T-cell (primary cell): ENCODE measurements at regions of chr2 and their contacts with region 1.

Region 1: DNA sequence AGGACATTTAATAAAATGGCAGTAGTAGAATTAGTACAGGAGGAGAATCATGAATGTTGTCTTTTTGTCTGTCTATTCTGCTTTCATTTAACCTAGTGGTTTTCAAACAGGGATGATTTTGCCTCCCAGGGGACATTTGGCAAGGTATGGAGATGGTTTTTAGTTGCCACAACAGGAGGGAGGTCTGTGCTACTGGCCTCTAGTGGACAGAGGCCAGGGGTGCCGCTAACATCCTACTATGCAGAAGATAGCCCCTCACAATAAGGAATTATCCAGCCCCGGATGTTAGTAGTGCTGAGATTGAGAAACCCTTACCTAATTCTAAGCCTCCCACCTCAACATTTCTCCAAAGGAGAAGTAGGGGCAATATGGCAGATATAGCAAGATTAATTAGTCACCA is 18.3 kb downstream of the FASTKD2 start:
- DNase-seq: no peak
- ATAC-seq: no peak
- H3K4me3 ChIP-seq: no peak overlapping the region
- H3K4me3 Mint-ChIP-seq: no peak overlapping the region
- H3K27ac ChIP-seq: no peak overlapping the region
- H3K27ac Mint-ChIP-seq: no peak overlapping the region
- H3K4me1 ChIP-seq: no peaks in the 10 kb centered on the region
- H3K4me1 Mint-ChIP-seq: peaks cover 10 to 13% (median 13%) of the 10 kb centered on the region in 3 donors
- H3K27me3 ChIP-seq: no peaks in the 10 kb centered on the region
- H3K27me3 Mint-ChIP-seq: no peaks in the 10 kb centered on the region

Region 2: GRCh38 chr2:206573793-206574192 is 209.9 kb before region 1 on chr2:
- CTCF ChIA-PET with region 1: interaction called in 1 of 2 experiments, 4 read pairs
- POLR2A ChIA-PET with region 1: interaction called in 1 of 2 experiments, 14 read pairs
- DNase-seq: no peak
- ATAC-seq: no peak
- H3K4me3 ChIP-seq: no peak overlapping the region
- H3K4me3 Mint-ChIP-seq: no peak overlapping the region
- H3K27ac ChIP-seq: no peak overlapping the region
- H3K27ac Mint-ChIP-seq: no peak overlapping the region
- H3K4me1 ChIP-seq: no peaks in the 10 kb centered on the region
- H3K4me1 Mint-ChIP-seq: no peaks in the 10 kb centered on the region
- H3K27me3 ChIP-seq: no peaks in the 10 kb centered on the region
- H3K27me3 Mint-ChIP-seq: peaks cover 0 to 4% of the 10 kb centered on the region in 2 donors

Region 3: GRCh38 chr2:206766057-206766930 is 17.4 kb before region 1 on chr2:
- CTCF ChIA-PET with region 1: interaction called, 4 to 16 read pairs
- POLR2A ChIA-PET with region 1: interaction called, 3 to 4 read pairs
- DNase-seq: no peak
- ATAC-seq: no peak
- H3K4me3 ChIP-seq: peak overlapping the region; percentile 78 to 99
- H3K4me3 Mint-ChIP-seq: peak overlapping the region in 2 of 3 donors; percentile 91 to 93
- H3K27ac ChIP-seq: peak overlapping the region; percentile 86
- H3K27ac Mint-ChIP-seq: peak overlapping the region; percentile 94 to 97
- H3K4me1 ChIP-seq: peaks cover 18 to 20% of the 10 kb centered on the region in 2 experiments
- H3K4me1 Mint-ChIP-seq: peaks cover 23 to 45% (median 40%) of the 10 kb centered on the region in 3 donors
- H3K27me3 ChIP-seq: peaks cover 0 to 6% of the 10 kb centered on the region in 2 experiments
- H3K27me3 Mint-ChIP-seq: no peaks in the 10 kb centered on the region